ENCODE measurements at regions of chr6 and their contacts with region 1.

Region 1: DNA sequence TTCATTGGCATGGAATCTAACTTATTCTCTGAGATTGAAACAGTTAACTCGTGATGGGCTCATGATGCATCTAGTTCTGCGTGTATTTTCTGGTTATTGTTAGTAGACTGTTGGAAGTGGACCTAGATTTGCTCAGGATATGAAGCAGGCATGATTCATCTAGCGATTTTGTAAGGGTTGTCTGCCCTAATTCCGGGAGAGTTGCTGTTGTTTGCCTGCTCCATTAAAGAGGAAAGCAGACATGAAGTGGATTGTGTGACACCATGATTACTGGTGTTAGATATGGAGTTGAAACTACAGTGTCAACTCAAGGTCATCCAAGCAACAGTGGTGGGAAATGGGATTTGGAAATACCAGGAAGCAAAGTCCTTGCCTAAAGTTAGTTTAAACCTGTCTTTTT is 41.0 kb downstream of the SOX4 start:
- DNase-seq: peak; percentile 97
- H3K4me3 ChIP-seq: no peak overlapping the region
- H3K27ac ChIP-seq: peak overlapping the region; percentile 67
- H3K4me1 ChIP-seq: peaks cover 16% of the 10 kb centered on the region
- H3K27me3 ChIP-seq: no peaks in the 10 kb centered on the region
- CTCF ChIP-seq: no peak
- POLR2A ChIP-seq: no peak

Region 2: DNA sequence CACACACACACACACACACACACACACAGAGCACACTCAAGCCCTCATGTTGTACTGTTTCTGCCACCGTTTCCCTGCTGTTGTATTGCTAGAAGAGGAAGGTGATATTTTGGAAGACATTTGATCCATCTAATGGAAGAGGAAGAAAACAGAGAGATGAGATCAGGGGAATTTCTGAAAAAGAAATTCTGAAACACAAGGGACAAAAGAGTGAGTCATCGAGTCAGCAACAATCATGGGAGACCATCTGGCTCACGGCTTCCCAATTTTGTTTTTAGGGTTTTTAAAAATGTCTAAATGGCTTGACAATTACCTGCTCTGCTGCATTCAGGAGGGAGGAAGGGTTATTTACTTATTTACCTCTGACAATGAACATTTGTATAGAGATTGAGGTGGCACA is 19.1 kb before region 1 on chr6:
- CTCF ChIA-PET with region 1: no interaction called
- POLR2A ChIA-PET with region 1: no interaction called
- dilution Hi-C with region 1: no loop called
- intact Hi-C with region 1: loop called (anchors 1 kb)
- DNase-seq: peak; percentile 89
- H3K4me3 ChIP-seq: no peak overlapping the region
- H3K27ac ChIP-seq: peak overlapping the region; percentile 87
- H3K4me1 ChIP-seq: peaks cover 20% of the 10 kb centered on the region
- H3K27me3 ChIP-seq: no peaks in the 10 kb centered on the region
- CTCF ChIP-seq: no peak
- POLR2A ChIP-seq: no peak

Region 3: GRCh38 chr6:21664314-21665109 is 29.9 kb after region 1 on chr6:
- CTCF ChIA-PET with region 1: interaction called, 3 read pairs
- POLR2A ChIA-PET with region 1: no interaction called
- dilution Hi-C with region 1: no loop called
- intact Hi-C with region 1: loop called (anchors 1 kb)
- DNase-seq: peak; percentile 61
- H3K4me3 ChIP-seq: peak overlapping the region; percentile 47 to 59 (median 55)
- H3K27ac ChIP-seq: peak overlapping the region; percentile 22
- H3K4me1 ChIP-seq: peaks cover 24% of the 10 kb centered on the region
- H3K27me3 ChIP-seq: no peaks in the 10 kb centered on the region
- CTCF ChIP-seq: no peak
- POLR2A ChIP-seq: no peak

Region 4: GRCh38 chr6:21826023-21826422 is 191.4 kb after region 1 on chr6:
- CTCF ChIA-PET with region 1: no interaction called
- POLR2A ChIA-PET with region 1: no interaction called
- dilution Hi-C with region 1: no loop called
- intact Hi-C with region 1: no loop called
- DNase-seq: no peak
- H3K4me3 ChIP-seq: no peak overlapping the region
- H3K27ac ChIP-seq: no peak overlapping the region
- H3K4me1 ChIP-seq: peaks cover 27% of the 10 kb centered on the region
- H3K27me3 ChIP-seq: no peaks in the 10 kb centered on the region
- CTCF ChIP-seq: no peak
- POLR2A ChIP-seq: no peak

Region 5: GRCh38 chr6:21840428-21840827 is 205.8 kb after region 1 on chr6:
- CTCF ChIA-PET with region 1: no interaction called
- POLR2A ChIA-PET with region 1: no interaction called
- dilution Hi-C with region 1: no loop called
- intact Hi-C with region 1: loop called (anchors 1 kb)
- DNase-seq: peak; percentile 96
- H3K4me3 ChIP-seq: peak overlapping the region in 1 of 3 experiments; percentile 13
- H3K27ac ChIP-seq: peak overlapping the region; percentile 96
- H3K4me1 ChIP-seq: peaks cover 45% of the 10 kb centered on the region
- H3K27me3 ChIP-seq: no peaks in the 10 kb centered on the region
- CTCF ChIP-seq: no peak
- POLR2A ChIP-seq: peak; percentile 49